Activated B cell treated with CpG ODN at 0.5 μM for 24 hours (primary cell): ENCODE measurements at regions of chr11 and their contacts with region 1.

Region 1: GRCh38 chr11:44621140-44621681 is 55.7 kb downstream of the CD82 start:
- DNase-seq: peak; percentile 71
- ATAC-seq: peak; percentile 49
- H3K4me3 Mint-ChIP-seq: peak overlapping the region; percentile 15
- H3K27ac Mint-ChIP-seq: no peak overlapping the region
- H3K4me1 Mint-ChIP-seq: peaks cover 67% of the 10 kb centered on the region
- H3K27me3 Mint-ChIP-seq: no peaks in the 10 kb centered on the region
- CTCF ChIP-seq: peak; percentile 20

Region 2: GRCh38 chr11:44110231-44110679 is 511.0 kb before region 1 on chr11:
- CTCF ChIA-PET with region 1: interaction called, 3 read pairs
- POLR2A ChIA-PET with region 1: no interaction called
- intact Hi-C with region 1: loop called (anchors 10 kb)
- DNase-seq: peak; percentile 26
- ATAC-seq: peak; percentile 96
- H3K4me3 Mint-ChIP-seq: no peak overlapping the region
- H3K27ac Mint-ChIP-seq: no peak overlapping the region
- H3K4me1 Mint-ChIP-seq: peaks cover 5% of the 10 kb centered on the region
- H3K27me3 Mint-ChIP-seq: no peaks in the 10 kb centered on the region
- CTCF ChIP-seq: peak; percentile 68

Region 3: DNA sequence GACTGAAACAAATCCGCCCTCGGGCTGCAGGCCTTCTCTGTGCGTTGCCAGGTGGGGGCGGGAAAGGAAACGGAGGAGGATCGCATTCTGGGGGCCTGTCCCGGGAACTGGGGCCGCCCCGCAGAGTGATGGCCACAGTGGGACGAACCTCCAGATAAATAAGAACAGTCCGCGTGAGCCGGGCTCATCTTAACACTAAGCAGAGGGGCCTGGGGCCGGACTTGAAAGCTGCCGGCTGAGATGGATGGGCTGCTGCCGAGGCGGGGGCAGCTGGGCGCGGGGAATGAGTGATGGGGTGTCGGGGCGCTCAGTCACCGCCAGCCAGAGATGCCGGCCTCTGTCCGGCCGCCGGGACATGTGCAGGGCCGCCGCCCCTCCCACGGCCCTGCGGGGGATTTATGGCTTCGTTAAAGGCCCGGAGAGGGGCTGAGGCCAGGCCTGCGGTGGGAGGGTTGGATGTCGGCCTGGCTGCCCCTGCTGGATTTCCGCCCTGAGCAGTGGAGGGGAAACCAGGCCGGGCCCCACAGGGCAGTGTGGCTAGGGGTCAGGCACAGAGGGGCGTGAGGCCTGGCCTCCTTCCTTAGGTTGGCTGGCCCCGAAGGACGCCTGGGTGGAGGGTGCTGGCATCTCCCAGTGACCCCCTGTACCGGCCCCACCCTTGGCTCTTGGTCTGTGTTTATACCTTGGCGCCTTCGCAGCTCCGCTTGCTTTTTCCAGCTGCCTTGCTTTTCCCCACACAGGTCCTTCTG is 101.0 kb before region 1 on chr11:
- CTCF ChIA-PET with region 1: interaction called, 32 read pairs
- POLR2A ChIA-PET with region 1: interaction called, 6 read pairs
- intact Hi-C with region 1: loop called (anchors 1 kb)
- DNase-seq: no peak
- ATAC-seq: no peak
- H3K4me3 Mint-ChIP-seq: no peak overlapping the region
- H3K27ac Mint-ChIP-seq: no peak overlapping the region
- H3K4me1 Mint-ChIP-seq: no peaks in the 10 kb centered on the region
- H3K27me3 Mint-ChIP-seq: peaks cover 30% of the 10 kb centered on the region
- CTCF ChIP-seq: no peak

Region 4: DNA sequence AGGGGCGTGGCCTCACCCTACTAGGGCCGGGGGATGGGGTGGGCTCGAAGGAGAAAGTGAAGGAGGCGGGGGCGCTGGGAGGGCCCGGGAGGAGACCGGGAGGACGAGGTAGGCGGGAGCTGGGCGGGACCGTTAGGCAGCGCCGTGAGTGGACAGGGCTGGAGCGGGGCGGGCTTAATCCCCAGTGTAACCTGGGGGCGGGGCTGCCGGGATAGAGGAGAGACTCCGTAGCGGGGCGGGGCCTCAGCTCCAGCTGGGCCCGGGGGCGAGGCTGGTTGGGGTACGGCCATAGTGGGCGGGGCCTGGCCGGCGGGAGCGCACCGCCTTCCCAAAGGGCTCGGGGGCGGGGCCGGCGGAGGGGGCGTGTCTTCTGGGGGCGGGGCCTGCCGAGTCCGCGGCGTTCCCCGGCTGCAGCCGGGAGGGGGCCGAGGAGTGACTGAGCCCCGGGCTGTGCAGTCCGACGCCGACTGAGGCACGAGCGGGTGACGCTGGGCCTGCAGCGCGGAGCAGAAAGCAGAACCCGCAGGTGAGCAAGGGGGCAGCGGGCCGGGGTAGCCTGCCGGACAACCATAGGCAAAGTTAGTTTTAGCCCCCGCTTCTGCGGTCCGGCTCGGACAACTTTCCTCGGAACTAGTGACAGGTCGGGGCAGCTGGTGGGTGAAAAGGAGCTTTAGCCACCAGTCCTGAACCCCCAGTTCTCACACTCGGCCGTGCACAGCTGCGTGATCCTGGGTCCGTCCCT is 55.8 kb before region 1 on chr11 and contains the start of gene CD82:
- CTCF ChIA-PET with region 1: interaction called, 398 read pairs
- POLR2A ChIA-PET with region 1: interaction called, 308 read pairs
- intact Hi-C with region 1: no loop called
- DNase-seq: peak; percentile 98
- ATAC-seq: peak; percentile 83
- H3K4me3 Mint-ChIP-seq: peak within 1 kb of the TSS; percentile 92
- H3K27ac Mint-ChIP-seq: peak within 1 kb of the TSS; percentile 80
- H3K4me1 Mint-ChIP-seq: peaks cover 72% of the 10 kb centered on the region
- H3K27me3 Mint-ChIP-seq: no peaks in the 10 kb centered on the region
- CTCF ChIP-seq: no peak
- total RNA-seq, gene CD82: 728 and 770 TPM in 2 replicates

Region 5: DNA sequence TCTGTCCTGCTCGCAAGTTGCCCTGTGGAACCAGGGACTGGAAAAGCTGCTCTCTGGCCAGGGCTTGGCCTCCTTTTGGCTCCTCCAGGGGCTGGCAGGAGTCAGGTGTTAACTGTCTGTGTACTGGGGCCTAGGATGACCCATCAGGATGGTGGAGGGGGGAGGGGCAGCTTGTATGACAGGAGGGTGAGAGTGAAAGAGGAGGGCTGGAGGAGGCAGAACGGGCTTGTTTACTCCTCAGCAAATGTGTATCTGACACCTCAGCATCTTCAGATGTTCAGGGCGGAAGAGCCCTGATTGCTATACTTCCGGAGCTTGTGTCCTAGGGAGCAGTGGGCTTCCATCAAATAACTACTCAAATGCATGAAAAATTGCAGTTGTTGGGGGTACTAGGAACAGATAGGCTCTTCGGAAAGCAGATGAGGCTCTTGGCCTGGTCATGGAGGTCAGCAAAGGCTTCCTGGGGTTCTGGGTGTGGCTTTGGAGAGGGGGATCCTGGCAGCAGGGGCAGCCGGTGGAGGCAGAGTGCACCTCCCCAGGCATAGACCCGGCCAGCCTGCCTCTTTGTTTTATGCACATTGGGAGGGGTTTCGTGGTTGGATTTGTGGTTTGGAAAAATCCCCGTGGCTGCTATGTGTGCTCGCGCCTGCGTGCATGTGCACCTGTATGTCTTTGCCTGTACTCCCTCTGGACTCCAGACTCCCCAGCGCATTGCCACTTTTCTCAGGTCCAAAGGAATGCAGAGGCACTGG is 24.5 kb before region 1 on chr11:
- CTCF ChIA-PET with region 1: interaction called, 34 read pairs
- POLR2A ChIA-PET with region 1: interaction called, 15 read pairs
- intact Hi-C with region 1: no loop called
- DNase-seq: peak; percentile 69
- ATAC-seq: peak; percentile 30
- H3K4me3 Mint-ChIP-seq: peak overlapping the region; percentile 82
- H3K27ac Mint-ChIP-seq: peak overlapping the region; percentile 94
- H3K4me1 Mint-ChIP-seq: peaks cover 95% of the 10 kb centered on the region
- H3K27me3 Mint-ChIP-seq: no peaks in the 10 kb centered on the region
- CTCF ChIP-seq: no peak

Region 6: DNA sequence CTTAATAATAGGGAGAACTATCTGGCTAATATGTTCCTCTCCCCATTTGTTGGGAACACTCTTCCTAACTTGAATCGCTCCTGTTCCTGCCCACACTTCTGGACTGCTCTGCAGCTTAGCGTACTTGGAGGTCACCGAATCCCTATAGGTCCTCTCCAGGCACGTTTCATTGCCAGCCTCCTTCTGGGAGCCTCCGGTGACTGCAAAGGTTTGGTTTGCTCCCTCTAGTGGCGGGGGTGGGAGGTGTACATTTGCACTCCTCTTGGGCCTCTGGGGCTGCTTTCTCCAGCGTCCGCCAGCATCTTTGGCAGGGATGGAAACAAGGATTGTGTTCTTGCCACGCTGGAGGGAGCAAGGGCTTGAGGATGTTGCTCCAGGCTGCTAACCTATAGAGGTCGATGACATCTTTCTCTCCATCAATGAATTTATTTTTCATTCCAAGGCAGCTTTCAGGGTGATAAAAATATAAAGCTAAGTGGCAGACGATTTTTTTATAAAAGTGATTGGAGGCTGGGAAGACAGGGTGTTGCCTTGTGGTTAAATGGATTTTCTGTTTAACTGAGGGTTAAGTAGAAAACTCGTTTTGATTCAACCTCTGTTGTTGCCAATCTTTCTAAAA is 154.3 kb after region 1 on chr11:
- CTCF ChIA-PET with region 1: interaction called, 5 read pairs
- POLR2A ChIA-PET with region 1: no interaction called
- intact Hi-C with region 1: loop called (anchors 1 kb)
- DNase-seq: peak; percentile 37
- ATAC-seq: peak; percentile 64
- H3K4me3 Mint-ChIP-seq: no peak overlapping the region
- H3K27ac Mint-ChIP-seq: peak overlapping the region; percentile 4
- H3K4me1 Mint-ChIP-seq: peaks cover 3% of the 10 kb centered on the region
- H3K27me3 Mint-ChIP-seq: no peaks in the 10 kb centered on the region
- CTCF ChIP-seq: peak; percentile 51

Region 7: GRCh38 chr11:44833877-44834452 is 212.8 kb after region 1 on chr11:
- CTCF ChIA-PET with region 1: no interaction called
- POLR2A ChIA-PET with region 1: no interaction called
- intact Hi-C with region 1: no loop called
- DNase-seq: no peak
- ATAC-seq: no peak
- H3K4me3 Mint-ChIP-seq: no peak overlapping the region
- H3K27ac Mint-ChIP-seq: no peak overlapping the region
- H3K4me1 Mint-ChIP-seq: no peaks in the 10 kb centered on the region
- H3K27me3 Mint-ChIP-seq: peaks cover 7% of the 10 kb centered on the region
- CTCF ChIP-seq: no peak

Region 8: DNA sequence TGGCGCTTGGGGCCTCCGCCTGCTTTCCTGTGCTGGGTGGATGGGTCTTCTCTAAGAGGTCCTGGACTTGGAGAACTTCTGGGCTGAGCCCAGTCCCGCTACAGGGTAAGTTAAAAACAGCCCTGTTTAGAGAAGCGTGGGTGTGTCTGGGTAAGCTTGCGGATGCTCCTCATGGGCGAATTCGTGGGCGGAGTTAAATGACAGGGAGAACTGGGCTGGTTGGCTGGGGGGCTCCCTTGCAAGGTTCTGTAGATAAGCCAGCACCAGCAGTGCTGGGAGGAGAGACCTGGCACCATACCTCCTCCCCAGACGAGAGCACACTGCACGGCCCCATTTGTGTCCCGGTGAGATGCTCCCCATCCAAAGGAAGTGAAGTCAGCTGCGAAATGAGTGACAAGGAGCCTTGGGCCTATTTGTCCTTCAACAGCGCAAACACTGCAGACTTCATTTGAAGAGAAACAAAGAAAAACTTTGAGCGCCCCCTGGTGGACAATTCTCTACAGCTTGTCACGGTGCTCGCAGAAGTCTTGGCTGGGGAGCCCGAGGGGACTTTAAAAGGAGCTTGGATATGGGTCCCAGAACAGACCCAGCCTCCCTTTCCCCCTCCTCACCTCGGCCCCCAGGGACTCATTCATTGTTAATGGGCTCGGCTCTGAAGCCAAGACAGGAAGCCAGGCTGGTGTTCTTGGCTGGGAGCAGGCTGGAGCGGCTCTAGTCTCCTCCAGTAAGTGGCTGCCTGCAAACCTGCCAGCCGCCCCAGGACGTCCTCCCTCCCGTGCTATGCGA is 290.0 kb after region 1 on chr11:
- CTCF ChIA-PET with region 1: interaction called, 12 read pairs
- POLR2A ChIA-PET with region 1: no interaction called
- intact Hi-C with region 1: loop called (anchors 1 kb)
- DNase-seq: peak; percentile 57
- ATAC-seq: peak; percentile 80
- H3K4me3 Mint-ChIP-seq: no peak overlapping the region
- H3K27ac Mint-ChIP-seq: no peak overlapping the region
- H3K4me1 Mint-ChIP-seq: peaks cover 20% of the 10 kb centered on the region
- H3K27me3 Mint-ChIP-seq: no peaks in the 10 kb centered on the region
- CTCF ChIP-seq: peak; percentile 39